Ascending aorta (tissue), 2 donors: ENCODE measurements at regions of chr11 and their contacts with region 1.

Region 1: GRCh38 chr11:69918938-69919650 is 99.9 kb upstream of the FGF3 start:
- DNase-seq: peak in 1 of 2 donors; percentile 93
- H3K4me3 ChIP-seq: peak overlapping the region; percentile 7 to 57
- H3K27ac ChIP-seq: peak overlapping the region; percentile 90 to 98
- H3K4me1 ChIP-seq: peaks cover 25 to 45% of the 10 kb centered on the region in 2 donors
- H3K27me3 ChIP-seq: no peaks in the 10 kb centered on the region
- CTCF ChIP-seq: peak; percentile 93 to 98 (median 96)

Region 2: DNA sequence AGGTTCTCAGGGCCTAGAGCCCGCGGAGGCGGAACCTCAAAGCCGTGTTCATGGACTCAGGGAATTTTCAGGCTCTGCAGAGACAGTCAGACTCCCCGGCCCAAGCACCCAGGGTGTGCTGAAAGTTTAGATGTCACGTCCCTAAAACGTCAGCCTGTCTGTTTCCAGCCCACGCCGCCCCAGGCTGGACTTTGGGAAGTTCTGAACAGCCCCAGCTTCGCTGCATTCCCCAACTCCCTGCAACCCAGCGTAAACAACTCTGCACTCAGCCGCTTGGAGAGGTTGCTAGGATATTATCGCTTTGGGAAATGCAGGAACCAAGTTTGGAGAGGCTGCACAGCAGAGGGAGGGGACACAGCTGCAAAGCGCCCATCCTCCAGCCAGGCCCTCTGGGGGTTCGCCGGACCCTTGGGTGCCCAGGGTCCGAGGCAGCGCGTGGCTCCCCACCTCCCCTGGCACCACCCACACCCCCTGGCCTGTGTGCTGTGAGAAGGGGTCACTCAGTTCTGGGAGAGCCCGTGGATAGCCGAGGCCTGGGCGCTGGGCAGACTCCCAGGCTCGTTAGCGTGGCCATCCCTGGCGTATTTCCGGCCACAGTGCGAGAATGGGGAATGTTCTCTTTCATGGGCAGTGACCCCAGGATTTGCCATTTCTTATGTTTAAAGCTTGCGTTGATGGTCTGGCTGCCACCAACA is 20.6 kb after region 1 on chr11:
- intact Hi-C with region 1: loop called (anchors 1 kb)
- DNase-seq: peak in 1 of 2 donors; percentile 89
- H3K4me3 ChIP-seq: peak overlapping the region in 1 of 2 donors; percentile 32
- H3K27ac ChIP-seq: peak overlapping the region; percentile 84 to 96
- H3K4me1 ChIP-seq: peaks cover 0 to 21% of the 10 kb centered on the region in 2 donors
- H3K27me3 ChIP-seq: no peaks in the 10 kb centered on the region
- CTCF ChIP-seq: no peak

Region 3: DNA sequence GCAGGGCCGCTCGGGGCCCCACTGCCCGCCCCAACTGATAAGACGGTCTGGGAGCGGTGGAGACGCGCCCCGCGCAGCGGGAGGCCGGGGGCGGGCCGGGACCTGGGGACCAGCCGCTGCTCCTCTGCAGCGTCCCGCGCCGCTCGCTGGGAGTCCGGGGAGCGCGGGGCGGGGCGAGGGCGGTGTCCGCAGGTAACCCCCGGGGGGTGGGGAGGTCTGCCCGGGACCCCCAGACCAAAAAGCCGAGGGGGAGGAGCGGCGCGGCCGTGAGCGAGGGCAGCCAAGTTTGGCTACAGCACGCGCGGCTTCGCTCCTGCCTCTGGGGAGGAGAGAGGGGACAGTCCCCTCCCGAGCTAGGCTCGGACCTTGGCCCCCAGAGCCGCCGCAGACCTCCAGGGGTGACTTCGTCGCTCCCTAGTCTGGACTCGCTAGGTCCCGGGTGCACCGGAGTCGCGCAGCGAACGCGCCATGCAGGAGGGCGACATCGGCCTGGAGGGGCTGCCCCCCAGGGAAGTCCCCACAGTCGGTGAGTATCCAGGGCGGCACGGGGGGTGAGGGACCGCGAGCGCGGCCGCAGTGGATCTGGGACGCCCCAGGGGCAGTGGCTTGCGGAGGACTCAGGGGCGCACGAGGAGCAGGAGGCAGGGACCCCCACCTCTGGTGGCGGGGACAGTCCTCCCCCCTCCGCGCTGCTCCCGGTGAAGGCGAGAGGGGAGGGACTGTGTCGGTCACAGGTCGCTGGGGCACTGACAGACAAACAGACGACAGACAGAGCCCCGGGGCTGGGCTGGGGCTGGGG is 66.7 kb after region 1 on chr11:
- intact Hi-C with region 1: loop called (anchors 2 kb)
- DNase-seq: no peak
- H3K4me3 ChIP-seq: peak overlapping the region; percentile 62 to 74
- H3K27ac ChIP-seq: peak overlapping the region; percentile 87 to 98
- H3K4me1 ChIP-seq: peaks cover 16 to 73% of the 10 kb centered on the region in 2 donors
- H3K27me3 ChIP-seq: no peaks in the 10 kb centered on the region
- CTCF ChIP-seq: no peak

Region 4: GRCh38 chr11:70073871-70074371 is 154.8 kb after region 1 on chr11:
- intact Hi-C with region 1: loop called (anchors 1 kb)
- DNase-seq: peak in 1 of 2 donors; percentile 86
- H3K4me3 ChIP-seq: no peak overlapping the region
- H3K27ac ChIP-seq: peak overlapping the region; percentile 85 to 89
- H3K4me1 ChIP-seq: peaks cover 0 to 19% of the 10 kb centered on the region in 2 donors
- H3K27me3 ChIP-seq: no peaks in the 10 kb centered on the region
- CTCF ChIP-seq: no peak

Region 5: DNA sequence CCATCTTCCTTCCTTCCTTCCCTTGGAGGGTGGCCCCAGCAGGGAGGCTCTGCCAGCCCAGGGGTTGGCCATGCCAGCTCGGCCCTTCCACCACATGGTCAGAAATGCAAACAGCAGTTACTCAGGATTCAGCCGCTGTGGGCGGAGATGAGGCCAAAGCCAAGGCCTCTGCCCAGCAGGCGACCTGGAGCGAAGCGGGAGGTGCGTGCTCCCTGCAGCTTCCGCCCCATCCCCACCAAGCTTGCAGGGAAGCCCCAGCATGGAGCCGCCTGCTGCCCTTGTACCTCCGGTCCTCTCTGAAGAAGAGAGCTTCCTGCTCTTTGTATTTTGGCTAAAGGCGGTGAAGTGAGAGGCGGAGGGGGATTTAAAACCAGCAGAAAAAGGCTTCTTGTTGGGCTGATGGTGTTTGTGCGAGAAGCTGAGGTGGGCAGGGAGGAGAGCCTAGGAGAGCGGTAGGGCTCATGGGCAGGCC is 209.4 kb after region 1 on chr11:
- intact Hi-C with region 1: loop called (anchors 2 kb)
- DNase-seq: peak in 1 of 2 donors; percentile 88
- H3K4me3 ChIP-seq: no peak overlapping the region
- H3K27ac ChIP-seq: peak overlapping the region; percentile 64 to 86
- H3K4me1 ChIP-seq: peaks cover 29 to 51% of the 10 kb centered on the region in 2 donors
- H3K27me3 ChIP-seq: no peaks in the 10 kb centered on the region
- CTCF ChIP-seq: peak; percentile 32 to 52 (median 33)

Region 6: DNA sequence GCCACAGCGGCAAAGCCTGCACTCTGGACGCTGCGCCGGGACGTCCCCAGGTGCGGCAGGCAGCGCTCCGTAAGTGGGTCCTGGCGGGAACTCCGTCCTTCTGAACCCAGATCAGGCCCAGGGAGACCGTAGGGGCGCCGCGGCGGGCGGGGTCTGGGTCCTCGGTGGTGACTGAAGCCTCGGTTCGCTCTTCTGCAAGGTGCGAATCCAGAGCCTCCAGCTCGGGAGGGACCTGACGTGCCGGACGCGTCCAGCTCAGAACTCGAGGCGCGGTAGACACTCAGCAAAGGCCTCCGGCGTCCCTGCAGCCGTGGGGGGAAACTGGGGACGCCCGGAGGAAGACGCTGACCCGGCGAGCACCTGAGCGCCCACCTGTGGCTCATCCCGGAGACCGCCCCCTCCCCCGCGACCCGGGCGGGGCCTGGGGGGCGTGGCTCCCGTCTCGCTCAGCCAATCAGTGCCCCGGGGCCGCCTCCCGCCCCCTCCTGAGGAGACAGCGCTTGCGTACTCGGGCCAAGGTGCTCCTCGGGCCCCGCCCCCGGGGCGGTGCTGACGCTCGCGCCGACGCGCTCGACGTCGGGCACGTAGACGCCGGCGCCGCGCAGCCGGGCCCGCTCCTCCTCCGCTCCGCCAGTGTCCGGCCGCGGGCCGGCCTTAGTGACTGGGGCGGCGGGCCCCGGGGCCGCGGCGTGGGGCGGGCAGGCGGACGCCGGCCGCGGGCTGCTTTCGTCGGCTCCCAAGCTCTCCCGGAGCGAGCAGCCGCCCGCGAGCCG is 351.2 kb after region 1 on chr11 and contains the start of gene PPFIA1:
- intact Hi-C with region 1: loop called (anchors 10 kb)
- DNase-seq: peak; percentile 74 to 97
- H3K4me3 ChIP-seq: peak within 1 kb of the TSS; percentile 88 to 98
- H3K27ac ChIP-seq: peak within 1 kb of the TSS; percentile 77 to 79
- H3K4me1 ChIP-seq: peaks cover 5 to 15% of the 10 kb centered on the region in 2 donors
- H3K27me3 ChIP-seq: no peaks in the 10 kb centered on the region
- CTCF ChIP-seq: peak in 1 of 3 experiments; percentile 14
- total RNA-seq, gene PPFIA1: 29.3 TPM